CD14-positive monocyte (primary cell): ENCODE measurements at regions of chr17 and their contacts with region 1.

Region 1: DNA sequence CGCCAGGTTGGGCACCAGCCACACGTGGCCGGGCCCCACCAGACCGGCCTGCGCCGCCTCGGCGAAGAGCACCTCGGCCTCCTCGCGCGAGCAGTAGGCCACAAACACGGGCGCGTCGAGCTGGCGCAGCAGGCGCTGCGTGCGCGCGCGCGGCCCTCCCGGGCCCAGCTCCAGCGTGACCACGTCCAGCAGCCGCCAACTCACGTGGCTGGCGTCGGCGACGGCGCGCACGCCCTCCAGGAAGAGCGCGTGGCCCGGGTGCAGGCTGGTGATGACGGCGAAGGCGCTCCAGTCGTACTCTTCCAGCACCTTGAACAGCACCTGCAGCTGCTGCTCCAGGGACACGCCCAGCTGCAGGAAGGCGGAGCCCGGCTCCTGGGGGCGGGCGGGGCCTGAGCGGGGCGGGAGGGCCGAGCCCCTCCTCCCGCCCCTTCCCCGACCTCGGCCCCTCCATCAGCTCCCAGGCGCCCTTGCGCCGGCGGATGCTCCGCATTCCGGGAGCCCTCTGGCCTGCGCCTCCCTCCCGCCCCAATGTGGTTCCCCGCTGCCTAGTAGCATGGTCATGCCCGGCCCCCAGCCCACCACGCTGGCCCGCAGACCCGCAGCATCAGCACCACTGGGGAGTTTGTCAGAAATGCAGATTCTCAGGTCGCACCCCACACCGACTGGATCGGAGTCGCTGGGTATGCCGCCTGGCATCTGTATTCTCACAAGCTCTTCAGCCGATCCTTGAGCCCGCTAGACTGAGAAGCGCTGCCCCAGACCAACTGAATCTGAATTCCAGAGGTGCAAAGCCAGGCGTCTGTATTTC is 7.2 kb downstream of the GRIN2C start:
- DNase-seq: no peak
- H3K4me3 ChIP-seq: no peak overlapping the region
- H3K4me3 Mint-ChIP-seq: peak overlapping the region in 1 of 2 donors; percentile 82
- H3K27ac ChIP-seq: no peak overlapping the region
- H3K27ac Mint-ChIP-seq: no peak overlapping the region
- H3K4me1 ChIP-seq: peaks cover 2 to 9% of the 10 kb centered on the region in 2 donors
- H3K4me1 Mint-ChIP-seq: peaks cover 3% of the 10 kb centered on the region
- H3K27me3 ChIP-seq: peaks cover 25 to 71% of the 10 kb centered on the region in 2 donors
- H3K27me3 Mint-ChIP-seq: peaks cover 73 to 90% (median 74%) of the 10 kb centered on the region in 3 donors
- CTCF ChIP-seq: no peak

Region 2: DNA sequence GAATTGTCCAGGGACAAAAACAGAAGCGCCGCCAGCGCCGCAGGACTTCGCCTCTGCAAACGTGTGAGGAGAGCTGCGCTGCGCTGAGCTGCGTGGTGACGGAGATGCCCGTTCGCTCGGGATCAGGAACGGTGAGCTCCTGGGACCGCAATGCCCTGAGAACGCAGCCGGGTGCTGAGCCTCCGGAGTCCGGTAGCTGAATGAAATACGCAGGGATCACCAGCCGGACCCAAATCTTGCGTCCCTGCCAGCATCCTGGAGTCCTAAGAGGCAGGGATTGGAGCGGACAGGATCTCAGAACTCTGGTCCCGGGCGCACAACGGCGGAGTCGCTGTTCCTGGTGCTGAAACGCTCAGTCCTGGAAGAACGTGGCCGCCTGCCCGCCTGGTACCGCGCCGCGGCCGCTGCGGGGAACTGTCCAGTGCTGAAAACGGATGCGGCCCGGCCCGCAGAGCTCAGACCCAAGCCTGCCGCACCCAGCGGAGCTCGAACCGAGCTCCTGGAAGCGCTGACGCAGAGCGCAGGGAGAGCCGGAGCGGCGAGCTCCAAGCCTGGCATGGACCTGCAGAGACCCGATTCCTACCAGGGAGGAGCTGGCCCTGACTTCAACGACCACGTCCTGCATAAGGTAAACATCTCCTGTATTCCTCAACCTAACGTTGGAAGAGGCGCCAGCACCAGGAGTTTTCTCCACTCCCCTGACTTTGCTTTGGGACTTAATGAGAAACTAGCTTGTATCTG is 181.2 kb before region 1 on chr17:
- intact Hi-C with region 1: no loop called
- DNase-seq: peak; percentile 77 to 81 (median 77)
- H3K4me3 ChIP-seq: no peak overlapping the region
- H3K4me3 Mint-ChIP-seq: peak overlapping the region in 1 of 2 donors; percentile 74
- H3K27ac ChIP-seq: no peak overlapping the region
- H3K27ac Mint-ChIP-seq: peak overlapping the region in 1 of 7 donors; percentile 19
- H3K4me1 ChIP-seq: peaks cover 0 to 2% of the 10 kb centered on the region in 2 donors
- H3K4me1 Mint-ChIP-seq: peaks cover 3% of the 10 kb centered on the region
- H3K27me3 ChIP-seq: peaks cover 34 to 50% of the 10 kb centered on the region in 2 donors
- H3K27me3 Mint-ChIP-seq: peaks cover 48 to 60% (median 49%) of the 10 kb centered on the region in 3 donors
- CTCF ChIP-seq: no peak

Region 3: GRCh38 chr17:74807925-74808324 is 44.5 kb before region 1 on chr17:
- intact Hi-C with region 1: loop called in 1 of 2 experiments (anchors 5 kb)
- DNase-seq: peak in 2 of 3 donors; percentile 26 to 34
- H3K4me3 ChIP-seq: no peak overlapping the region
- H3K4me3 Mint-ChIP-seq: no peak overlapping the region
- H3K27ac ChIP-seq: no peak overlapping the region
- H3K27ac Mint-ChIP-seq: peak overlapping the region in 2 of 7 donors; percentile 13 to 36
- H3K4me1 ChIP-seq: peaks cover 49 to 61% of the 10 kb centered on the region in 2 donors
- H3K4me1 Mint-ChIP-seq: peaks cover 62% of the 10 kb centered on the region
- H3K27me3 ChIP-seq: no peaks in the 10 kb centered on the region
- H3K27me3 Mint-ChIP-seq: peaks cover 2 to 7% (median 4%) of the 10 kb centered on the region in 3 donors
- CTCF ChIP-seq: no peak